ENCODE measurements at regions of chr5 and their contacts with region 1.

Region 1: DNA sequence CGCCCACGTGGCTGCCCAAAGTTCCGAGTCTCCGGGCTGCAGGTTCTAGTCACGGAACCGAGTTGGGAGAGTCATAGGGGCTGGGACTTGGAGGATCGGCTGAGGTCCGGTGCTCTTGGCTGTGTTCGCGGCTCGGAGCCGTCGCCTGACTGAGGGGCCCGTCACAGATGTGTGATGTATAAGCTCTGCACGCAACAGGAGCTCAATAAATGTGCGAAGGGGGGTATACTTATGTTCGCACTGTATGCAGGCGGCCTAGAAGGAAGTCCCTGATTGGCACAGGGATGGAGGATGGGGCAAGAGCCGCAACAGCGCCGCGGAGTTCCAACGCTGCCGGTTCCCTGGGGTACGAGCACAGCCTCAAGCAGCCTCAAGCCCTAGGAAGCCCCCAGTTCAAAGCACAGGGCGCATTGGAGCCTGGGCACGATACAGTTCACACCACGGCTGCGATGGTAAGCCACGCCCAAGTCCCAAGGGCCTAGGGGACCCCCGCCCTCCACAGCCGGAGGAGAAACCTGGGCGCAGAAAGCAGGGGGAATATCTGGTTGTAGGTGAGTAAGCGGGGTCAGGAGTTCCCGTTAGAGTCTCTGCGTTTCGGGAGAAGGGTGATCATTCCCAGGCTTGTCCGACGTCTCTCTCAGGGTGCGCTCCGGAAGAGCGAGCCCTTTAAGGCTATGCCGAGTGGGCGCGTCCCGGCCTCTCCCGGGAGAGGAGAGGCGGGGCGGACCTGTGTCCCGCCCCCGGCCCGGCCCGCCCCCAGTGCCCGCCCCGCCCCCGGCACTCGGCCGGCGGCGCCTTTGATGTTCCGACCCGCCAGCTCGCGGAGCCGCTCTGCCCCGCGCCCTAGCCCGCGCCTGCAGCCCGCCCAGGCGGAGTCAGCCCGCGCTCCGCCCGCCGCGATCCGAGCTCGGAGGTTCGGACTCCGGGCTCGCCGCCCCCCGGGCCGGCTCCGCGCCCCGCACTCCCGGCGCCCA is at the start of gene TCF7:
- DNase-seq: no peak
- ATAC-seq: peak; percentile 82
- H3K4me3 ChIP-seq: peak within 1 kb of the TSS; percentile 83
- H3K27ac ChIP-seq: peak within 1 kb of the TSS; percentile 56
- H3K4me1 ChIP-seq: peaks cover 40% of the 10 kb centered on the region
- H3K27me3 ChIP-seq: no peaks in the 10 kb centered on the region; a peak in 1 of 4 replicates
- CTCF ChIP-seq: no peak
- EP300 ChIP-seq: no peak
- POLR2A ChIP-seq: peak; percentile 72
- RAD21 ChIP-seq: no peak
- polyA plus RNA-seq, gene TCF7: 10.0 to 13.2 TPM

Region 2: DNA sequence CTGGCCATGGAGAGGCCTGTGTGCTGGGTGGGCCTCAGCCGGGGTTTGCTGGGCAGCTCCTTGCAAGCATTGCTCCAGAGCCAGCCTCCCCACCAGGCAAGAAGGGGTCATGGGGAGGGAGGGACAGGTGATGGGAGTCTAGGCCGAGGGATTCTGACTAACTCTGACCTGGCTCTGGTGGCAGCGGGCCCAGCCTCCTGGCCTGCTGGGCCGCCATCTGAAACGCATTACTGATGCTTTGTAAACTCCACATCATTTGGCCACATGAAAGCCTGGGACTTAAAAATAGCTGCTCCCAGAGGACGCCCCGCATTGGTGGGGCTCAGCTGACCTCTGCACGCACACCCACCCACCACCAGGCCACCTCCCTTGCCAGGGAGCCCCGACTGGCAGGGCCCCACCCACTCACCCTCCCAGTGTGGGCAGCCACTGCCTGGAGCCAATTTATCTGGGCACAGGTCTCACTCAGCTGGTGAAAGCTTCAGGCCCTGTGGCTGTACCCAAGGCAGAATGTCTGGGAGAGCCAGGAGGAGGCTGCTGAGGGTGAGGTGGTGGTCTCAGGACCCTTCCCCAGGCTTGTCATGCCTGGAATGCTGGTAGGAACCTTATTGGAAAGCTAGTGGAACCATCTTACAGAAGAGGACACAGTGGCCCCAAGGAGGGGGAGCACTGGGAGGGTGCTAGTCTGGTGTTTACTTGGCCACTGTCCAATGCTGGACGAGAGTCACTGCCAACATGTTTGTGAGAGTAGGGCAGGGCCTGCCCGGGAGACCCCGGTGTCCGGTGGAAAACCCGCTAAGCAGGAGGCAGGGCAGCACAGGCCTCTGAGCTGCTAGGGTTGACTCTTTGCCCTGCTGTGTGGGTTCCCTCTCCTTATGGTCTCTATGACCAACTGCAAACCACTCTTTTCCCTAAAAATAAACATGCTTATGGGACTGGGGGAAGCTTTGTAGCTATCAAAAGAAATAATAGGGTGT is 11.1 kb after region 1 on chr5:
- CTCF ChIA-PET with region 1: interaction called, 24 read pairs
- POLR2A ChIA-PET with region 1: interaction called, 291 read pairs
- RAD21 ChIA-PET with region 1: interaction called, 90 read pairs
- SMC1A ChIA-PET with region 1: no interaction called
- in situ Hi-C with region 1: no loop called
- intact Hi-C with region 1: loop called (anchors 2 kb)
- DNase-seq: no peak
- ATAC-seq: peak; percentile 41
- H3K4me3 ChIP-seq: no peak overlapping the region
- H3K27ac ChIP-seq: peak overlapping the region; percentile 47
- H3K4me1 ChIP-seq: peaks cover 64% of the 10 kb centered on the region
- H3K27me3 ChIP-seq: no peaks in the 10 kb centered on the region
- CTCF ChIP-seq: no peak
- EP300 ChIP-seq: 0 out of 4 replicates have a peak, but pooled peaks of 1 of the 2 experiments have one; percentile 11
- POLR2A ChIP-seq: no peak
- RAD21 ChIP-seq: no peak

Region 3: DNA sequence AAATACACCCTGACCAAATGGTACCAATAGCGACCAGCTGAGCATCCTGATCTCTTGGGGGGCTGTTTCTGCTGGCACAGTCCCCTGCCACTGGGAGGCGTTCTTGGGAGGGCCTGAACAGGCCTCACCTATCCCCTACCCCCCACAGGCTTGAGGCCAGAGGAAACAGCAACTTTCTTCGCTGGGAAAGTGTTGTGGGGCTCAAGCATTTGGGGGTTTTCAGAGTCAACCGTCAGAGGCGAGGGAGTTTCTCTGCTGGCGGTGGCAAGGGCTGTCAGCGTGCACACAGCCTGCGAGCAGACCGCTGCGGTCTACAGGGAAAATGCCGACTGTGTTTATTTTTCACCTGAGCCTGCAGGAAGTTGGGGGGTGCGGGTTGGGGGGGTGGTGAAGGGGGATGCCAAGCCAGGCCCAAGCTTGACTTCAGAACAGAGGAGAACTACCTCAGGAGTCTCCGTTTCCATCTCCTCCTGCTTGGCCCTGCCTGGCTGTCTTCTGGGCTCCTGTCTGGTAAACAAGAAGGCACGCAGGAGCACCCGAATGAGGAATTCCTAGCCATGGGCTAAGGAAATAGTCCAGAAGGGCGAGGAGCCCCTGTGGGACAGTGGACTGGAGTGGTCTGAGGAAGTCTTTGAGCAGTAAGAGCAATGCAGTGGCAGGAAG is 18.3 kb after region 1 on chr5:
- CTCF ChIA-PET with region 1: interaction called, 88 read pairs
- POLR2A ChIA-PET with region 1: interaction called, 291 read pairs
- RAD21 ChIA-PET with region 1: interaction called, 123 read pairs
- SMC1A ChIA-PET with region 1: no interaction called
- in situ Hi-C with region 1: no loop called
- intact Hi-C with region 1: loop called (anchors 2 kb)
- DNase-seq: peak; percentile 92
- ATAC-seq: peak; percentile 85
- H3K4me3 ChIP-seq: peak overlapping the region; percentile 49; the same call in 1 of the 2 replicates
- H3K27ac ChIP-seq: peak overlapping the region; percentile 98
- H3K4me1 ChIP-seq: peaks cover 71% of the 10 kb centered on the region
- H3K27me3 ChIP-seq: no peaks in the 10 kb centered on the region
- CTCF ChIP-seq: peak; percentile 65 to 80 (median 75)
- EP300 ChIP-seq: peak; percentile 96 to 98
- POLR2A ChIP-seq: peak; percentile 47
- RAD21 ChIP-seq: peak; percentile 76

Region 4: DNA sequence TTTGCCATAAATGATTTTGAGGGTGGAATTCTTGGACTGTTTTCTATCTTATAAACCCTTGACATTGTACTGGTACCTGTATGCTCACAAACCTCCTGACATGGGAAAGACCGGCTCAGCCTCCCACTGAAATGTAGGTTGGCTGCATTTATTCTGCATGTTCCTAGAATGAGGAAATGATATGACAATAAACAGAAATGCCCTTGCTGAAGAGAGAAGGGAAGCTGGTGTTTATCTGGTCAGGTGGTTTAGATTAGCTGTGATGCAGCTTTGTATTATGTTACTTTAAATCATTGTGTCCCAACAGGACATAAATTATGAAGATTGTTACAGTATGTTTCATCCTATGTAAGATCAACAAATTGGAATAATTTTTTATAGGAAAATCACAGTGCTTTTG is 830.4 kb after region 1 on chr5:
- CTCF ChIA-PET with region 1: no interaction called
- POLR2A ChIA-PET with region 1: no interaction called
- RAD21 ChIA-PET with region 1: no interaction called
- SMC1A ChIA-PET with region 1: no interaction called
- in situ Hi-C with region 1: no loop called
- intact Hi-C with region 1: no loop called
- DNase-seq: no peak
- ATAC-seq: no peak
- H3K4me3 ChIP-seq: no peak overlapping the region
- H3K27ac ChIP-seq: no peak overlapping the region
- H3K4me1 ChIP-seq: no peaks in the 10 kb centered on the region
- H3K27me3 ChIP-seq: no peaks in the 10 kb centered on the region
- CTCF ChIP-seq: no peak
- EP300 ChIP-seq: no peak
- POLR2A ChIP-seq: no peak
- RAD21 ChIP-seq: no peak